ENCODE measurements at regions of chr17 and their contacts with region 1.

Region 1: GRCh38 chr17:44522883-44523671 is 19.9 kb upstream of the GPATCH8 start:
- DNase-seq: peak; percentile 69
- ATAC-seq: peak; percentile 100
- H3K4me3 ChIP-seq: no peak overlapping the region
- H3K27ac ChIP-seq: no peak overlapping the region
- H3K4me1 ChIP-seq: peaks cover 0 to 8% of the 10 kb centered on the region in 2 experiments; a peak in 3 of 4 replicates
- H3K27me3 ChIP-seq: no peaks in the 10 kb centered on the region
- CTCF ChIP-seq: peak; percentile 80 to 90 (median 89)
- POLR2A ChIP-seq: no peak
- RAD21 ChIP-seq: peak; percentile 93

Region 2: GRCh38 chr17:44014437-44015172 is 508.5 kb before region 1 on chr17 and contains the start of gene TMEM101:
- CTCF ChIA-PET with region 1: no interaction called
- POLR2A ChIA-PET with region 1: no interaction called
- RAD21 ChIA-PET with region 1: no interaction called
- intact Hi-C with region 1: no loop called
- DNase-seq: peak; percentile 91
- ATAC-seq: peak; percentile 85
- H3K4me3 ChIP-seq: peak within 1 kb of the TSS; percentile 100
- H3K27ac ChIP-seq: peak within 1 kb of the TSS; percentile 96
- H3K4me1 ChIP-seq: peaks cover 12 to 30% of the 10 kb centered on the region in 2 experiments
- H3K27me3 ChIP-seq: no peaks in the 10 kb centered on the region
- CTCF ChIP-seq: no peak
- POLR2A ChIP-seq: peak; percentile 53
- RAD21 ChIP-seq: no peak
- total RNA-seq, gene TMEM101: 43.8 TPM

Region 3: GRCh38 chr17:44110823-44111633 is 412.0 kb before region 1 on chr17:
- CTCF ChIA-PET with region 1: no interaction called
- POLR2A ChIA-PET with region 1: no interaction called
- RAD21 ChIA-PET with region 1: no interaction called
- intact Hi-C with region 1: no loop called
- DNase-seq: no peak
- ATAC-seq: peak; percentile 86
- H3K4me3 ChIP-seq: peak overlapping the region; percentile 17 to 43
- H3K27ac ChIP-seq: peak overlapping the region; percentile 66
- H3K4me1 ChIP-seq: peaks cover 46 to 66% of the 10 kb centered on the region in 2 experiments
- H3K27me3 ChIP-seq: no peaks in the 10 kb centered on the region
- CTCF ChIP-seq: no peak
- POLR2A ChIP-seq: no peak
- RAD21 ChIP-seq: no peak

Region 4: GRCh38 chr17:44218344-44219107 is 304.6 kb before region 1 on chr17:
- CTCF ChIA-PET with region 1: interaction called, 4 read pairs
- POLR2A ChIA-PET with region 1: no interaction called
- RAD21 ChIA-PET with region 1: no interaction called
- intact Hi-C with region 1: loop called (anchors 10 kb)
- DNase-seq: peak; percentile 74
- ATAC-seq: peak; percentile 51
- H3K4me3 ChIP-seq: peak overlapping the region; percentile 71 to 73
- H3K27ac ChIP-seq: peak overlapping the region; percentile 100
- H3K4me1 ChIP-seq: peaks cover 21 to 37% of the 10 kb centered on the region in 2 experiments
- H3K27me3 ChIP-seq: no peaks in the 10 kb centered on the region
- CTCF ChIP-seq: peak; percentile 36 to 60 (median 52); a peak in 4 of 6 replicates
- POLR2A ChIP-seq: no peak
- RAD21 ChIP-seq: no peak; the same call in 1 of the 2 replicates

Region 5: DNA sequence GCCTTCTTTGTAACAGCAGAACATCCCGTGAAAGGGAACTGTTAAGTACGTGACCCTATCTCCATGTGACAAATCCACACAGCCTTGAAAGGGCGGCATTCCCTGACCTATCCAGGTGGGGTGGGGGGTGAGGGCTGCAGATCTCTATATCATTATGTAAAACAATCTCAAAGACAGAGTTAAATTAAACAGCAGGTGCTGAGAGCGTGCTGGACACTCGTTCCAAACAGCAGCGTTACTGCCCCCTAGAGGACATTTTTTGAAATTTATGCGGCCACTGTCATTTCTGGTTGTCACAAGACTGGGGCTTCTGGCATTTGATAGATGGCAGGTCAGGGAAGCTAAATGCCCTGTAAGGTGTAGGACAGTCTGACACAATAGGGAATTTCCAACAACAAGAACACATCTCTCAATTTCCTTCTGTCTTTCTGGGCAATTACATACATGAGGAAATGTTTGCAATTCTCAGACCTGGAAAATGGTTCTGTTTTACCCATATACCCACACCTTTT is 191.8 kb before region 1 on chr17:
- CTCF ChIA-PET with region 1: interaction called, 13 read pairs
- POLR2A ChIA-PET with region 1: no interaction called
- RAD21 ChIA-PET with region 1: no interaction called
- intact Hi-C with region 1: no loop called
- DNase-seq: peak; percentile 79
- ATAC-seq: peak; percentile 63
- H3K4me3 ChIP-seq: no peak overlapping the region; a peak in 1 of 4 replicates
- H3K27ac ChIP-seq: no peak overlapping the region
- H3K4me1 ChIP-seq: peaks cover 18 to 31% of the 10 kb centered on the region in 2 experiments
- H3K27me3 ChIP-seq: no peaks in the 10 kb centered on the region
- CTCF ChIP-seq: peak; percentile 75 to 93 (median 88)
- POLR2A ChIP-seq: no peak
- RAD21 ChIP-seq: peak; percentile 85

Region 6: DNA sequence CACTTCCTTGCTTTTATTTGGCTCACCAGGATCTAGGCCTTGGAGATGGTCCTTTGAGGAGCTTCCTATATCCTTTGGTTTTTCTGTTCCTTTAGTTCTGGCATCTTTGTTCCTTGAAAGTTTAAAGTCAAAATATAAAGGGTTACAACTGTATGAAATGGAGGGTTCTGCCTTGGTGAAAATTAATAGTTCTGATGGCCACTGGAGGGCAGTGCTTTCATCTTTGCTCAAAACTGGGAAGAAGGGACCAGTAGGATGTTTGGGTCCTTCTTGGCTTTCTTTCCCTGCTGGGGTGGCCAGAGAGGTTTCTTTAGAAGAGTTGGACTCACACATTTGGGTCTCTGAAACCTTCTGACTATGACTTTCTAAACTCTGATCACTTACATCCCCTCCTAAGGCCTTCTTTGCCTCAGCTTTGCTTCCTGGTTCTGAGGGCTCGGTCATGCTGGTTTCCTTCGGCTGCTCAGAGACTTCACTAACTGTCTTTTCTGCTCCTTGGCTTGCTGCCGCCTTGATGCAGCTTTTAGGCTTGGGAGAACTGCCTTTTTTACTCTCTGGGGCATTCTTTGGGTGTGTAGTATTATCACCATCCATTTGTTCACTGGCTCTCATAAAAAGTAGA is 122.7 kb before region 1 on chr17:
- CTCF ChIA-PET with region 1: interaction called, 8 read pairs
- POLR2A ChIA-PET with region 1: no interaction called
- RAD21 ChIA-PET with region 1: interaction called, 3 to 5 read pairs
- intact Hi-C with region 1: loop called (anchors 1 kb)
- DNase-seq: peak; percentile 12
- ATAC-seq: peak; percentile 74; the same call in 1 of the 2 replicates
- H3K4me3 ChIP-seq: no peak overlapping the region
- H3K27ac ChIP-seq: no peak overlapping the region
- H3K4me1 ChIP-seq: no peaks in the 10 kb centered on the region
- H3K27me3 ChIP-seq: no peaks in the 10 kb centered on the region
- CTCF ChIP-seq: peak; percentile 50 to 59 (median 53); a peak in 5 of 6 replicates
- POLR2A ChIP-seq: no peak
- RAD21 ChIP-seq: peak; percentile 65

Region 7: GRCh38 chr17:44444735-44445105 is 78.4 kb before region 1 on chr17:
- CTCF ChIA-PET with region 1: interaction called, 20 read pairs
- POLR2A ChIA-PET with region 1: interaction called, 4 read pairs
- RAD21 ChIA-PET with region 1: no interaction called
- intact Hi-C with region 1: loop called (anchors 5 kb)
- DNase-seq: no peak
- ATAC-seq: no peak
- H3K4me3 ChIP-seq: no peak overlapping the region
- H3K27ac ChIP-seq: no peak overlapping the region
- H3K4me1 ChIP-seq: peaks cover 10 to 21% of the 10 kb centered on the region in 2 experiments
- H3K27me3 ChIP-seq: no peaks in the 10 kb centered on the region
- CTCF ChIP-seq: no peak
- POLR2A ChIP-seq: no peak
- RAD21 ChIP-seq: no peak

Region 8: GRCh38 chr17:44503147-44504029 is 19.7 kb before region 1 on chr17 and contains the start of gene GPATCH8:
- CTCF ChIA-PET with region 1: interaction called, 11 read pairs
- POLR2A ChIA-PET with region 1: interaction called, 8 read pairs
- RAD21 ChIA-PET with region 1: no interaction called
- intact Hi-C with region 1: no loop called
- DNase-seq: peak; percentile 88
- ATAC-seq: peak; percentile 98
- H3K4me3 ChIP-seq: peak within 1 kb of the TSS; percentile 82 to 92
- H3K27ac ChIP-seq: peak within 1 kb of the TSS; percentile 85
- H3K4me1 ChIP-seq: peaks cover 11 to 19% of the 10 kb centered on the region in 2 experiments
- H3K27me3 ChIP-seq: no peaks in the 10 kb centered on the region
- CTCF ChIP-seq: no peak
- POLR2A ChIP-seq: peak; percentile 46
- RAD21 ChIP-seq: no peak
- total RNA-seq, gene GPATCH8: 28.7 TPM

Region 9: DNA sequence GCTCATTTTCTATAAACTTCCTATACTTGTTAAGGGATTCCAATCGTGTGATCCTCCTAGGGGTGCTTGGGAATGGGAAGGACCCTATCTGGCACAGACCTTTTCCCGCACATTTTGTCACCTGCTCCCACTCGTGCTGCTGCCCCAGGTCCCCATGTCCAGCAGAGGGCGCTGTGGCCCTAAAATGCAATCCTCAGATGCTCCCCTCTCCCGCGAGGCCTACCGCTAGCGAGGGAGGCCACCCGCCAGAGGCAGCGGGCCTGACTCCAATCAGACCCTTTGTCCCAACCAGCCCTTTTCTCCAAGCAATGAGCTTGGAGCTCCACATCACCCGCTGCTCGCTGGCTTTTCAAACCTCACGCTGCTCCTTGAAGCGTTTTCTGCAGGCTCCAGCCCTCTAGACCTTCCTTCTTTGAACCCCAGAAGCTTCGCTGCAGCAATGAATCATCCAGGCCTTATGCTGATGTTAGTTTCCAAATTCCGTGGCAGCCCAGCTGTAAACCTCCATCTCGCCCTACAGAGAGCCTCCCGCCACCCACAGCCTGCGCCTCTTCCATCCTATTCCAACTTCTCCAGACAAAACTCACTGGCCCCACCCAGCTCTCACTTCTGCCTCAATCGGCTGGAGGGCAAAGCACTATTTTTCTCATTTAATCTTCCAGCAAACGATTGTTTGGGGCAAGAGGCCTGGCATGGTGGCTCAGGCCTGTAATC is 10.6 kb after region 1 on chr17:
- CTCF ChIA-PET with region 1: interaction called, 24 read pairs
- POLR2A ChIA-PET with region 1: no interaction called
- RAD21 ChIA-PET with region 1: interaction called in 1 of 2 experiments, 3 read pairs
- intact Hi-C with region 1: no loop called
- DNase-seq: peak; percentile 77
- ATAC-seq: peak; percentile 94
- H3K4me3 ChIP-seq: no peak overlapping the region
- H3K27ac ChIP-seq: peak overlapping the region; percentile 15; the same call in 1 of the 2 replicates
- H3K4me1 ChIP-seq: peaks cover 6 to 32% of the 10 kb centered on the region in 2 experiments; a peak in 3 of 4 replicates
- H3K27me3 ChIP-seq: no peaks in the 10 kb centered on the region
- CTCF ChIP-seq: peak; percentile 91 to 99 (median 94)
- POLR2A ChIP-seq: no peak
- RAD21 ChIP-seq: peak; percentile 98

Region 10: DNA sequence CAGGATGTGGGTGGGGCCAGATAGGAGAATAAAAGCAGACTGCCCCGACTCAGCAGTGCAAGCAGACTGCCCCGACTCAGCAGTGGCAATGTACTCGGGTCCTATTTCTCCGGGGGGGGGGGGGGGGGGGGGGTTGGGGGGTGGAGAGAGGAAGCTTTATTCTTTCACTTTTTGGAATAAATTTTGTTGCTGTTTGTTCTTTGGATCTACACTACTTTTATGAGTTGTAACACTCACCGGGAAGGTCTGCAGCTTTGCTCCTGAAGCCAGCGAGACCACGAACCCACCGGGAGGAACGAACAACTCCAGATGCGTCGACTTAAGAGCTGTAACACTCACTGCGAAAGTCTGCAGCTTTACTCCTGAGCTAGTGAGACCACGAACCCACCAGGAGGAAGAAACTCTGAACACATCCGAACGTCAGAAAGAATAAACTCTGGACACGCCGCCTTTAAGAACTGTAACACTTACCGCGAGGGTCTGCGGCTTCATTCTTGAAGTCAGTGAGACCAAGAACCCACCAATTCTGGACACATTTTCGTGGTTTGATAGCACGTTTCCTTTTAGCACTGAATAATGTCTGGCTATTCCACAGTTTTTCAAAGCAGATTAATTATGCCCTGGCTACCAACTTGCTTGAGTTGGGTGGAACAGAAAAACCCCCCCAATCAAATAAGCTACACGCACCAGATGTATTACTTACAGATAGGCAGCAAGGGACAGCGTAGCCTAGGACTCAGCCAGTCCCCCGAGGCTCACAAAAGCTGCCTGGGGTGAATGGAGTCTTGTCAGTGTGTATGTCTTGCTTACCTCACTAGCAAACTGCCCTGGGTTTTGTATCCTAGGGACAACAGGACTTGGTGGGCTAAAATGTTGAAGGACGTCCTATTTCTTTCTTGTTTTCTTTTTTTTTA is 46.1 kb after region 1 on chr17:
- CTCF ChIA-PET with region 1: no interaction called
- POLR2A ChIA-PET with region 1: no interaction called
- RAD21 ChIA-PET with region 1: no interaction called
- intact Hi-C with region 1: no loop called
- DNase-seq: no peak
- ATAC-seq: peak; percentile 38; the same call in 1 of the 2 replicates
- H3K4me3 ChIP-seq: no peak overlapping the region
- H3K27ac ChIP-seq: no peak overlapping the region
- H3K4me1 ChIP-seq: peaks cover 0 to 7% of the 10 kb centered on the region in 2 experiments; a peak in 2 of 4 replicates
- H3K27me3 ChIP-seq: no peaks in the 10 kb centered on the region
- CTCF ChIP-seq: no peak
- POLR2A ChIP-seq: no peak
- RAD21 ChIP-seq: no peak

Region 11: DNA sequence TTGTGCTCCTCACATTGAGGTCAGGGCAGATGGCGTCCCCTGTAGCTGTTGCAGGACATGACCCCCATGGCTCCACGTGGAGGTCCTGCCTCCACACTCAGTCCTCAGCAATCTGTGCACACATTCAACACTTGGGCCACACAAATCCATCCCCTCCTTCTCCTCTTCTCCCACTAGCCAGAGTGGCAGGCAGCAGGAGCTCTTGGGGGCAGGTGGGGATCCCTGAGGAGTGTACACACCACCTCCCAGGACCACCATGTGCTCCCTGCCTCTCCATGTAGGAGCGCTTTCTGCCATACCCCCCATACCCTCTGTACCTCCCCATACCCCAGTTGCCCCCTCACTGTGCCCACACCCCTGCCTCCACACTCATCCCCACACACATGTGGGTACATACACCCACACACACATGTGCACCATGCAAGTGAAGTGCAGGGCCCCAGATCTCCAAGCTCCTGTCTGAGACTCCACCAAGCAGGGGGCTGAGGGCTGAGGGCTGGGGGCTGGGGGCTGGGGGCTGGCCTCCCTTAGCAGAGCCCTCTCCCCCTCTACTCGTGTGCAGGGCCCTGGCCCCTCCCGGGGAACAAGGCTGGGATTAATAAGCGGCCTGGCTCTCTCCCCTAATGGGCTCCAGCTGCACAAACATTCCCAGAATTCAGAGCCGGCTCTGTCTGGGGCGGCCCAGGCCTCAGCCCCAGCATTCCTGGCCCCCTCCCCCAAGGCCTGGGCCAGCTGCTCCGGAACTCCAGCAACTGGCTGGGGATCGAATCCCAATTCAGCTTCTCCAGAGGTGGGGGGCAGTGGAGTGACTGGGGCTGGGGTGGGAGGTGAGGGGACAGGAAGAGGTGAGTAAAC is 85.0 kb after region 1 on chr17:
- CTCF ChIA-PET with region 1: no interaction called
- POLR2A ChIA-PET with region 1: no interaction called
- RAD21 ChIA-PET with region 1: no interaction called
- intact Hi-C with region 1: no loop called
- DNase-seq: no peak
- ATAC-seq: no peak
- H3K4me3 ChIP-seq: no peak overlapping the region
- H3K27ac ChIP-seq: no peak overlapping the region
- H3K4me1 ChIP-seq: no peaks in the 10 kb centered on the region
- H3K27me3 ChIP-seq: no peaks in the 10 kb centered on the region
- CTCF ChIP-seq: no peak
- POLR2A ChIP-seq: no peak
- RAD21 ChIP-seq: no peak

Measured in HCT116 (cell line).